B cell (primary cell): ENCODE measurements at regions of chr19 and their contacts with region 1.

Region 1: GRCh38 chr19:48321622-48322591 is 3.4 kb upstream of the EMP3 start:
- DNase-seq: peak; percentile 99
- ATAC-seq: peak; percentile 67
- H3K4me3 ChIP-seq: peak overlapping the region; percentile 67 to 96 (median 81)
- H3K4me3 Mint-ChIP-seq: peak overlapping the region; percentile 97
- H3K27ac ChIP-seq: peak overlapping the region; percentile 95 to 100
- H3K27ac Mint-ChIP-seq: peak overlapping the region; percentile 100
- H3K4me1 ChIP-seq: peaks cover 46 to 61% of the 10 kb centered on the region in 2 donors
- H3K4me1 Mint-ChIP-seq: peaks cover 51% of the 10 kb centered on the region
- H3K27me3 ChIP-seq: no peaks in the 10 kb centered on the region
- H3K27me3 Mint-ChIP-seq: no peaks in the 10 kb centered on the region
- CTCF ChIP-seq: no peak

Region 2: GRCh38 chr19:47735131-47735530 is 586.8 kb before region 1 on chr19:
- CTCF ChIA-PET with region 1: no interaction called
- POLR2A ChIA-PET with region 1: no interaction called
- intact Hi-C with region 1: no loop called
- DNase-seq: no peak
- ATAC-seq: no peak
- H3K4me3 ChIP-seq: no peak overlapping the region
- H3K4me3 Mint-ChIP-seq: no peak overlapping the region
- H3K27ac ChIP-seq: no peak overlapping the region
- H3K27ac Mint-ChIP-seq: no peak overlapping the region
- H3K4me1 ChIP-seq: peaks cover 2 to 5% of the 10 kb centered on the region in 2 donors
- H3K4me1 Mint-ChIP-seq: no peaks in the 10 kb centered on the region
- H3K27me3 ChIP-seq: peaks cover 0 to 9% (median 6%) of the 10 kb centered on the region in 4 experiments
- H3K27me3 Mint-ChIP-seq: peaks cover 19% of the 10 kb centered on the region
- CTCF ChIP-seq: no peak

Region 3: DNA sequence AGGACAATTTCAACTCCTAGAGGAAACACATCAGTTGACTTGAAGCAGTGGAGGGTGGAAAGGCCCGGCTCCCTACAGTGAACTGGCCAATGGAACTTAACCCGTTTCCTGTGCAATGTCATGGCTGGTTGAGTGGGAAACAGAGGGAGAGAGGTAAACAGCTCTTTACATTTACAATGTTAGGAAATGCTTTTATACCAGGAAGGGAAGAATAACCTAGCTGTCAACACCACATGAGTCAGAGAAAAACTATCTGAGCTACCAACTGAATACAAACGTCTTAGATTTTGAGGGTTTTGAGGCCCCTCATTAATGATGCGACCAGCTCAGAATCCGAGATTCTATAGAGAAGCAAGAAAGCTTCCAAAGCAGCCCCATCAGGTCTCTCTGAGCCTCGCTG is 102.9 kb before region 1 on chr19:
- CTCF ChIA-PET with region 1: no interaction called
- POLR2A ChIA-PET with region 1: no interaction called
- intact Hi-C with region 1: no loop called
- DNase-seq: no peak
- ATAC-seq: no peak
- H3K4me3 ChIP-seq: no peak overlapping the region
- H3K4me3 Mint-ChIP-seq: no peak overlapping the region
- H3K27ac ChIP-seq: no peak overlapping the region
- H3K27ac Mint-ChIP-seq: no peak overlapping the region
- H3K4me1 ChIP-seq: no peaks in the 10 kb centered on the region
- H3K4me1 Mint-ChIP-seq: no peaks in the 10 kb centered on the region
- H3K27me3 ChIP-seq: no peaks in the 10 kb centered on the region
- H3K27me3 Mint-ChIP-seq: no peaks in the 10 kb centered on the region
- CTCF ChIP-seq: no peak

Region 4: DNA sequence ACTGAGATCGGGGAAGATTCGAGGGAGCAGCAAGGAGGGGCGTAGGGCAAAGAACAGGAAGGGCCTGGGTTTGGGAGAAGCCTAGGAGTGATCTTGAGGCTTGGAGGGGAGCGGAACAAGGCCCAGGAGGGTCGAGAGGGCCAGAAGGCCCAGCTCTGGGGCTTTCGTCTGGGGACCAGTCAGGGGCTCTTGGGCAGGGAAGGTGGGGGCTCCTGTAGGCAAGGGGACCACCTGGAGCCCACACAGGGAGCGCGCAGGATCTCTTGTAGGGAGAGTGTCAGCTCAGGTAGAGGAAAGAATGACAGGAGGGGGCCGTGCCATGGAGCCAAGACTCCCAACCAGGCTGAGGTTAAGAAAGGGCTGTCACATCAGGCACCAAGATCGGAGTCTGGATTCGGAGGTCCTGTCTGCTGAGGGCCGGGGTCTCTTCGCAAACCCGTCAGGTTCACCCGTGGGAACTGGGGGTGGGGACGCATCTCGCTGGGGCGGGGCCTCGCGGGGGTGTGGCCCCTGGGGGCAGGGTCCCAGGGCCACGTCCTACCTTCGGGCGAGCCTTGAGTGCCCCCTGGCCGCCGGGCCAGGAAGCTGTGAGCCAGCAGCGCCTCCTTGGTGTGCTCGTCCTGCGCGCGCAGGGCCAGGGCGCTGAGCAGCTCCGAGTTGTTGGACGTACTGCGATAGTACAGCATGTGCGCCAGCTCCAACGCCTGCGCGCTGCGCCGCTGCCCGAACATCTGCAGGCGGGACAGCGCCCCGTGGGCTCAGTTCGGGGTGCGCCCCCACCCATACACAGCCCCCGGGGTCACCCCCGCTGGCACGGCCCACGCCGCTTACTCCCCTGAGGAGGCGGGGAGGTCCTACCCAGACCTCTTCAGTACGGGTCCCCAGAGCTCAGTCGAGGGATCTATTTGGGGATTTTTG is 11.8 kb after region 1 on chr19:
- CTCF ChIA-PET with region 1: interaction called, 345 read pairs
- POLR2A ChIA-PET with region 1: interaction called, 180 read pairs
- intact Hi-C with region 1: loop called (anchors 1 kb)
- DNase-seq: peak; percentile 94
- ATAC-seq: peak; percentile 62
- H3K4me3 ChIP-seq: peak overlapping the region; percentile 59 to 94 (median 90)
- H3K4me3 Mint-ChIP-seq: peak overlapping the region; percentile 98
- H3K27ac ChIP-seq: peak overlapping the region; percentile 82 to 94
- H3K27ac Mint-ChIP-seq: peak overlapping the region; percentile 95
- H3K4me1 ChIP-seq: peaks cover 42 to 54% of the 10 kb centered on the region in 2 donors
- H3K4me1 Mint-ChIP-seq: peaks cover 49% of the 10 kb centered on the region
- H3K27me3 ChIP-seq: no peaks in the 10 kb centered on the region
- H3K27me3 Mint-ChIP-seq: no peaks in the 10 kb centered on the region
- CTCF ChIP-seq: peak; percentile 83

Region 5: DNA sequence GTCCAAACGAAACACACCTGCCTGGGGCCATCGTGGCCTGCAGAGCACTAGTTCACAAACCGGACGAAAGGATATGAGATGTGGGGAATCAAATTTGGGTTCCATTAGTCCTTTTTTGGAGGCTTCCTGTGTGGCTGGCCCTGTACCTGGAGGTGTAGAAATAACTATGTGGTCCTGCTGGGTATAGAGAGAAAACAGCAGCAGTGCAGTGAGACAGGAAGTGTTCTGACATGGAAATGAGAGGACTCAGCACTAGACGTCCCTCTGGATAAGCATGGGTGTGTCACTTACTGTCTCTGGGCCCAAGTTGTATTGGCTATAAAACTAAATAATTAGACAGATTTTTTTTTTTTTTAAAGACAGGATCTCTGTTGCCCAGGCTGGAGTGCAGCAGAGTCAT is 57.2 kb after region 1 on chr19:
- CTCF ChIA-PET with region 1: no interaction called
- POLR2A ChIA-PET with region 1: no interaction called
- intact Hi-C with region 1: no loop called
- DNase-seq: no peak
- ATAC-seq: no peak
- H3K4me3 ChIP-seq: no peak overlapping the region
- H3K4me3 Mint-ChIP-seq: no peak overlapping the region
- H3K27ac ChIP-seq: no peak overlapping the region
- H3K27ac Mint-ChIP-seq: no peak overlapping the region
- H3K4me1 ChIP-seq: no peaks in the 10 kb centered on the region
- H3K4me1 Mint-ChIP-seq: no peaks in the 10 kb centered on the region
- H3K27me3 ChIP-seq: no peaks in the 10 kb centered on the region
- H3K27me3 Mint-ChIP-seq: no peaks in the 10 kb centered on the region
- CTCF ChIP-seq: no peak

Region 6: DNA sequence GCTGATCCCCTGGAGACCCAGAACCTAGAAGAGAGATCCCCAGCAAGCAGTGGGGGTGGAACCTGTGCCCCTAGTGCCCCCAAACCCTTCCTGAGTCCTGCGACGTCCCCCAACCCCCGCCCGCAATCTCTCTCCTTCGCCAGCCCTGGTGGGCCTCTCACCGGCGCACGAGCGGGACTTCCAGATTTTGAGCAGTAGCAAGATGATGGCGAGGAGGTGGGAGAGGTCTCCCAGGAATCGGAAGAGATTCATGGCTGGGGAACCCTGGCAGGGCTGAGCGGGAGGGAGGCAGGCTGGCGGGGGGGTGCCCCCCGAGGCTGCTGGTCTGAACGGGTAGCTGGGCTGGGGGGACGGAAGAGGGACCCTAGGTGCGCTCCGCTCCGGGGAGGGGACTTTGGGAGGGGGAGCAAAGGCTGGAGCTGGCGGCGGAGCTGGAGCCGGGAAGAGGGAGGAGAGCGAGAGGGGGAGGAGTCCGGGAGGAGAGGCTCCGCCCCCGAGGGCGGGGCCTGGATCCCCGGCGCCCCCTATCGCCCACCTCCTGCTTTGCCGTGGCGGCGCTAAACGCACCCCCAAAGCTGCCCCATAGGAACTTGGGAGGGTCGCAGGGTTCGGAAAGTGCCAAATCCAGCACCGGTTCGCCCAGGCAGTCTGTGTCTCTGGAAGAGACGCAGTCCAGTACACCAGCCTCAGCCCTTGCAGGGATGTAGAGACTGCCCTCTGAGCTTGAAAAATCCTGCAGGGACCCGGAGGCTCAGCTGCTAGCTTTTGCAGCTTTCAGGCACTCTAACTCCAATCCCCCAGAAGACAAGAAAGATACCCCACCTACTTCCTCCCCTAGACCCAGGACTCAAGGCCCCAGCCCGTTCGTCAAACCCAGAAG is 69.4 kb after region 1 on chr19 and contains the start of gene KDELR1:
- CTCF ChIA-PET with region 1: interaction called, 7 read pairs
- POLR2A ChIA-PET with region 1: interaction called, 4 read pairs
- intact Hi-C with region 1: loop called (anchors 2 kb)
- DNase-seq: peak; percentile 86
- ATAC-seq: peak; percentile 88
- H3K4me3 ChIP-seq: peak within 1 kb of the TSS; percentile 71 to 93 (median 85)
- H3K4me3 Mint-ChIP-seq: peak within 1 kb of the TSS; percentile 95
- H3K27ac ChIP-seq: peak within 1 kb of the TSS; percentile 79 to 80
- H3K27ac Mint-ChIP-seq: peak within 1 kb of the TSS; percentile 92
- H3K4me1 ChIP-seq: peaks cover 39 to 45% of the 10 kb centered on the region in 2 donors
- H3K4me1 Mint-ChIP-seq: peaks cover 24% of the 10 kb centered on the region
- H3K27me3 ChIP-seq: peaks cover 0 to 39% (median 23%) of the 10 kb centered on the region in 4 experiments
- H3K27me3 Mint-ChIP-seq: peaks cover 25% of the 10 kb centered on the region
- CTCF ChIP-seq: peak; percentile 88
- total RNA-seq, gene KDELR1: 60.5 and 62.7 TPM in 2 replicates

Region 7: GRCh38 chr19:48419158-48419920 is 97.4 kb after region 1 on chr19:
- CTCF ChIA-PET with region 1: no interaction called
- POLR2A ChIA-PET with region 1: no interaction called
- intact Hi-C with region 1: no loop called
- DNase-seq: peak; percentile 80
- ATAC-seq: peak; percentile 82
- H3K4me3 ChIP-seq: peak overlapping the region in 4 of 5 experiments; percentile 10 to 43 (median 20)
- H3K4me3 Mint-ChIP-seq: peak overlapping the region; percentile 90
- H3K27ac ChIP-seq: no peak overlapping the region
- H3K27ac Mint-ChIP-seq: peak overlapping the region; percentile 80
- H3K4me1 ChIP-seq: peaks cover 16 to 17% of the 10 kb centered on the region in 2 donors
- H3K4me1 Mint-ChIP-seq: peaks cover 24% of the 10 kb centered on the region
- H3K27me3 ChIP-seq: peaks cover 0 to 43% (median 9%) of the 10 kb centered on the region in 4 experiments
- H3K27me3 Mint-ChIP-seq: peaks cover 35% of the 10 kb centered on the region
- CTCF ChIP-seq: no peak

Region 8: DNA sequence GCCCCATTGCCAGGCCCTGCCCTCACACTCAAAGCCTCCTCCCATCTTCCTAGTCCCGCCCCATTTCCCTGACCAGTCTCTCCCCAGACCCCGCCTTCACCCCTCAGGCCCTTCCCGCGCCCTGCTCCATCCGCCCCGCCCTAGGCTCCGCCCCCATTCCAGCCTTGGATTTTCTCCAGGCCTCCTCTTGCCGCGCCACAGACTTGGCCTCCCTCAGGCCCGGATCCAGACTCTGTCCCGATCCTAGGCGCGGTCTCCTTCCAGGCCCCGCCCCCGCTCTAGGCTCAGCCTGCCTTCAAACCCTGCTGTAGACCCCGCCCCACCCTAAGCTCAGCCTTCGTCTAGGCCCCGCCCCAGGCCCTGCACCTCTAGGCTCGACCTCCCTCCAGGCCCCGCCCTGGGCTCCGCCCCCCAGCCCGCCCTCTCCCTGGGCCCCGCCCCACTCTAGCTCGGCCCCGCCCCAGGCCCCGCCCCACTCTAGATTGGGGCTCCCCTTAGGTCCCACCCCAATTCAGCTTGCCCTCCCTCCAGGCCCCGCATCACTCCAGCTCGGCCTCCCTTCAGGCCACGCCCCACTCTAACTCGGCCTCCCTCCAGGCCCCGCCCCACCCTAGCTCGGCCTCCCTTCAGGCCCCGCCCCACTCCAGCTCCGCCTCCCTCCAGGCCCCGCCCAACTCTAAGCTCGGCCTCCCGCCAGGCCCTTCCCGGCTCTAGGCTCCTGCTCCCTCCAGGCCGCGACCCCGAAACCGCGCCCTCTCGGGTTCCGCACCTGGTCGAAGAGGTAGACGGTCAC is 171.2 kb after region 1 on chr19:
- CTCF ChIA-PET with region 1: interaction called, 3 read pairs
- POLR2A ChIA-PET with region 1: interaction called, 8 read pairs
- intact Hi-C with region 1: loop called (anchors 1 kb)
- DNase-seq: peak; percentile 82
- ATAC-seq: peak; percentile 69
- H3K4me3 ChIP-seq: peak overlapping the region in 4 of 5 experiments; percentile 22 to 56 (median 48)
- H3K4me3 Mint-ChIP-seq: peak overlapping the region; percentile 69
- H3K27ac ChIP-seq: no peak overlapping the region
- H3K27ac Mint-ChIP-seq: no peak overlapping the region
- H3K4me1 ChIP-seq: peaks cover 51 to 53% of the 10 kb centered on the region in 2 donors
- H3K4me1 Mint-ChIP-seq: peaks cover 35% of the 10 kb centered on the region
- H3K27me3 ChIP-seq: peaks cover 0 to 57% (median 28%) of the 10 kb centered on the region in 4 experiments
- H3K27me3 Mint-ChIP-seq: peaks cover 35% of the 10 kb centered on the region
- CTCF ChIP-seq: no peak

Region 9: DNA sequence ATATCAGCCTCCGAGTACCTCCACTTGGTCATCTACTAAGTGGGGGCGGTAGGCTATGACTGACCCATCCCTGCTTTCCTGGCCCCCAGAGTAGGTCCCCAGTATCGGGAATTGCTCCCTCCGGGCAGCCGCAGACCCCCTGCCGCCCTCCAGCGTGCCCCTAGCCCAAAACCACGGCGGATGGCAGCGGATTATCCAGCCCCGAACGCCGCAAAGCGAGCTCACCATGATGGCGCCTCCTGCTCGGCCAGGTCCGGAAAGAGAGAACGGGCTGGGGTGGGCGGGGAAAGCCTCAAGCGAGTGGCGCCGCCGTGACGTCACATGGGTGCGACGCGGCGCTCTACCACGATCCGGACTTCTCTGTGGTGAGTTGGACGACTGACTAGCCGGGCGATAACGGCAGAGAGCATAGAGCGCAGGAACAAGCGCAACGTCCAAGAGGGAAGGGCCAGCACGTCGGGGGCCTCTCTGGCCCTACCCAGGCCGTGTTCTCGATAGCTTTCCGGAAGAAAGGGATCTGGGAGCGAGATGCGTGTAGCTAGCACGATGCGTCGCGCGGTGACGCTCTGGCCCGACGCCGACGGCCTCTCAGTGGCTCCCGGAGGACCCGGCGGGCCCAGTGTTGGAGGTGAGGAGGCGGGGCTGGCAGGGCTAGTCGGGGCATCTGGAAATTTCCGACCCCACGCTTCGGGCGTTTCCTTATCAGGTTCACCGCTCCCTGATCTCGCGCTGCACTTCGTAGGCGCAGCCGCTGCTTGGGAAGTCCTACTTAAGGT is 297.2 kb after region 1 on chr19 and contains the starts of genes RPL18 and SPHK2:
- CTCF ChIA-PET with region 1: interaction called, 3 read pairs
- POLR2A ChIA-PET with region 1: interaction called, 3 read pairs
- intact Hi-C with region 1: loop called (anchors 1 kb)
- DNase-seq: peak; percentile 99
- ATAC-seq: peak; percentile 82
- H3K4me3 ChIP-seq: peak within 1 kb of the TSS; percentile 95 to 100 (median 99)
- H3K4me3 Mint-ChIP-seq: peak within 1 kb of the TSS; percentile 98
- H3K27ac ChIP-seq: peak within 1 kb of the TSS; percentile 87 to 91
- H3K27ac Mint-ChIP-seq: peak within 1 kb of the TSS; percentile 98
- H3K4me1 ChIP-seq: peaks cover 25 to 45% of the 10 kb centered on the region in 2 donors
- H3K4me1 Mint-ChIP-seq: peaks cover 51% of the 10 kb centered on the region
- H3K27me3 ChIP-seq: no peaks in the 10 kb centered on the region
- H3K27me3 Mint-ChIP-seq: no peaks in the 10 kb centered on the region
- CTCF ChIP-seq: no peak
- total RNA-seq, gene RPL18: 2,217 and 2,248 TPM in 2 replicates
- total RNA-seq, gene SPHK2: 45.4 and 47.3 TPM in 2 replicates